Activated T-helper 1 cell treated with anti-CD3 and anti-CD28 coated beads, Interleukin-12 subunit alpha, Interleukin-12 subunit beta, Interleukin-2, Interleukin-4 antibody, amounts not matched to agents 30 ng/mL and 10 ng/mL and 1 ng/mL, durations not matched to agents 14 hours and 24 hours and 36 hours (primary cell): ENCODE measurements at regions of chr11 and their contacts with region 1.

Region 1: GRCh38 chr11:56783448-56784041 is 35.0 kb upstream of the OR9G4 start:
- DNase-seq: no peak
- H3K4me3 Mint-ChIP-seq: no peak overlapping the region
- H3K27ac Mint-ChIP-seq: no peak overlapping the region
- H3K4me1 Mint-ChIP-seq: no peaks in the 10 kb centered on the region
- H3K27me3 Mint-ChIP-seq: no peaks in the 10 kb centered on the region

Region 2: GRCh38 chr11:55942785-55943392 is 840.7 kb before region 1 on chr11:
- intact Hi-C with region 1: loop called (anchors 2 kb)
- DNase-seq: no peak
- H3K4me3 Mint-ChIP-seq: no peak overlapping the region
- H3K27ac Mint-ChIP-seq: no peak overlapping the region
- H3K4me1 Mint-ChIP-seq: no peaks in the 10 kb centered on the region
- H3K27me3 Mint-ChIP-seq: no peaks in the 10 kb centered on the region

Region 3: GRCh38 chr11:56251954-56252353 is 531.6 kb before region 1 on chr11 and contains the start of gene OR5T3:
- intact Hi-C with region 1: no loop called
- DNase-seq: no peak
- H3K4me3 Mint-ChIP-seq: no peak within 1 kb of the TSS
- H3K27ac Mint-ChIP-seq: no peak within 1 kb of the TSS
- H3K4me1 Mint-ChIP-seq: no peaks in the 10 kb centered on the region
- H3K27me3 Mint-ChIP-seq: no peaks in the 10 kb centered on the region
- total RNA-seq, gene OR5T3: not detected in 2 replicates

Region 4: DNA sequence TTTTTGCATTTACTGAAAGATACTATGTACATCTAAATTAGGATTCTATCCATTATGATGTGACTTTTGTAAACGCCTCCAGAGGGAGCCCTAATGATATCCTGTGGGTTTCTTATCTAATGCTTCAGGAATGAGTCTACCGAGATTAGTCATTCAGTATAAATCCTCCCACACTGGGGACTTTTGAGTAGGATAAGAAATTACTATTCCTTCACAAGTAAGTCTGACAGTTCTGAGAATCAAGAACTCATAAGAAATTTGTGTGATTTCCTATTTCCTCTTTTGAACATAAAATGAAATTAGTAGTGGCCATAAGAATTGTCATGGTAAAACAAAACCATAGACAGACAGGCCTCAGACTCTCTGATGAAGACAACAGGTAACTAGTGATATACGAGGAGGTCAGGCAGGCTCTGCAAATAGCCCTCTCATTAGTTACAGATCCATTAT is 158.9 kb before region 1 on chr11:
- intact Hi-C with region 1: loop called (anchors 1 kb)
- DNase-seq: no peak
- H3K4me3 Mint-ChIP-seq: no peak overlapping the region
- H3K27ac Mint-ChIP-seq: no peak overlapping the region
- H3K4me1 Mint-ChIP-seq: no peaks in the 10 kb centered on the region
- H3K27me3 Mint-ChIP-seq: no peaks in the 10 kb centered on the region

Region 5: GRCh38 chr11:56876621-56877275 is 93.2 kb after region 1 on chr11:
- intact Hi-C with region 1: no loop called
- DNase-seq: no peak
- H3K4me3 Mint-ChIP-seq: no peak overlapping the region
- H3K27ac Mint-ChIP-seq: no peak overlapping the region
- H3K4me1 Mint-ChIP-seq: no peaks in the 10 kb centered on the region
- H3K27me3 Mint-ChIP-seq: no peaks in the 10 kb centered on the region

Region 6: GRCh38 chr11:56977314-56977713 is 193.8 kb after region 1 on chr11:
- intact Hi-C with region 1: no loop called
- DNase-seq: no peak
- H3K4me3 Mint-ChIP-seq: no peak overlapping the region
- H3K27ac Mint-ChIP-seq: no peak overlapping the region
- H3K4me1 Mint-ChIP-seq: no peaks in the 10 kb centered on the region
- H3K27me3 Mint-ChIP-seq: no peaks in the 10 kb centered on the region